ENCODE measurements at regions of chr1 and their contacts with region 1.

Region 1: DNA sequence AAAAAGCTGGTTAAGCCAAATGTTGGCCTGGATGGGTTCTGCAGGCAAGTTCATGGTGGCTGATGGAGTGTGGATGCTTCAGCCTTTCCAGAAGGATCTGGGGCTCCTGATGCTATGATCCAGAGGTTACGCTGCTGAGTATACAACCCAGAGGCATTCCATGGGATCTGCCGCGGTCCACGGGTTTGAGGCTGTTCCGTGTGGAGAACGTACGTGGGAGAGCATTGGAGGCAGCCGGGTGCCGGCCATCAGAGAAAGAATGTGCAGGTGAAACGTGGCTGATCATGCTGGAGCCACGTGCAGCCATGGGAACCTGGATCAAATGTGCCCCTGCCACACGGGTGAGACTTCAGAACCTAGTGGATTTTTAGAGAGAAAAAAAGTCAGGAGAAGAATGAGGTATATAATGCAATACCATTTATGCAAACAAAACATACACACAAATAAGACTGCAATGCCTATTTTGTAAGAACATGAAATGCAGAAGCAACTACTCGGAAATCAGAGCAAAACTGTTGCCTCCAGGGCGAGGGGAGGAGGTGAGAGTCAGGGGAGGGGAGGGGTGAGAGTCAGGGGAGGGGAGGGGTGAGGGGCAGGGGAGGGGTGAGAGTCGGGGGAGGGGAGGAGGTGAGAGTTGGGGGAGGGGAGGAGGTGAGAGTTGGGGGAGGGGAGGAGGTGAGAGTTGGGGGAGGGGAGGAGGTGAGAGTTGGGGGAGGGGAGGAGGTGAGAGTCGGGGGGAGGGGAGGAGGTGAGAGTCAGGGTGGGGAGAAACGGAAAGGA is 116.5 kb upstream of the C1orf174 start:
- DNase-seq: no peak
- H3K27ac ChIP-seq: no peak overlapping the region
- CTCF ChIP-seq: no peak

Region 2: GRCh38 chr1:4003846-4004505 is 12.6 kb before region 1 on chr1:
- CTCF ChIA-PET with region 1: interaction called, 3 read pairs
- POLR2A ChIA-PET with region 1: interaction called, 11 read pairs
- DNase-seq: no peak
- H3K27ac ChIP-seq: no peak overlapping the region
- CTCF ChIP-seq: no peak